Activated CD4-positive, alpha-beta T cell treated with anti-CD3 and anti-CD28 coated beads, Interleukin-2, amount 10 ng/mL, durations not matched to agents 24 days and 14 days (primary cell): ENCODE measurements at regions of chr7 and their contacts with region 1.

Region 1: DNA sequence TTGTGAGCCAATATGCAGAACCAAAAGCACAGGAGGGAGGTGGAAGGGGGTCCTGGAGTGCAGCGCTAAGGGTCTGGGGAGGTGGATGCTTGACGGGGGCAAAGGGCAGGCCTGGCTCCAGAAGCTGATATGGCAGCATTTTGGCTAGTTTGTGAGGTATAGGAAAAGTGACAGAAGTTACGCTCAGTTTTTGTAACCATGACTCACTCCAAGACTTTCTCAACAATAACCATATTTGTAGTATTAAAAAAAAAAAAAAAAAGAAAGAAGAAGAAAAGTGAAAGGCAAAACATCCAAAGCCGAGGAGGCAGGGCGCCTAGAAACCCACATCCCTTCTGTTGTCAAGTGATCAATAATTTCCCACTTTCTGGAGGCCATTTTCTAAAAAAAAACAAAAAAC is 92.3 kb downstream of the RNF216 start:
- DNase-seq: peak; percentile 86
- H3K4me3 Mint-ChIP-seq: peak overlapping the region; percentile 72
- H3K27ac Mint-ChIP-seq: peak overlapping the region; percentile 97
- H3K4me1 Mint-ChIP-seq: peaks cover 51% of the 10 kb centered on the region
- H3K27me3 Mint-ChIP-seq: no peaks in the 10 kb centered on the region

Region 2: GRCh38 chr7:5170251-5170650 is 518.9 kb before region 1 on chr7:
- intact Hi-C with region 1: no loop called
- DNase-seq: peak; percentile 68
- H3K4me3 Mint-ChIP-seq: peak overlapping the region; percentile 37
- H3K27ac Mint-ChIP-seq: no peak overlapping the region
- H3K4me1 Mint-ChIP-seq: peaks cover 15% of the 10 kb centered on the region
- H3K27me3 Mint-ChIP-seq: no peaks in the 10 kb centered on the region

Region 3: GRCh38 chr7:5636914-5637313 is 52.2 kb before region 1 on chr7:
- intact Hi-C with region 1: loop called (anchors 5 kb)
- DNase-seq: no peak
- H3K4me3 Mint-ChIP-seq: no peak overlapping the region
- H3K27ac Mint-ChIP-seq: no peak overlapping the region
- H3K4me1 Mint-ChIP-seq: peaks cover 10% of the 10 kb centered on the region
- H3K27me3 Mint-ChIP-seq: no peaks in the 10 kb centered on the region

Region 4: DNA sequence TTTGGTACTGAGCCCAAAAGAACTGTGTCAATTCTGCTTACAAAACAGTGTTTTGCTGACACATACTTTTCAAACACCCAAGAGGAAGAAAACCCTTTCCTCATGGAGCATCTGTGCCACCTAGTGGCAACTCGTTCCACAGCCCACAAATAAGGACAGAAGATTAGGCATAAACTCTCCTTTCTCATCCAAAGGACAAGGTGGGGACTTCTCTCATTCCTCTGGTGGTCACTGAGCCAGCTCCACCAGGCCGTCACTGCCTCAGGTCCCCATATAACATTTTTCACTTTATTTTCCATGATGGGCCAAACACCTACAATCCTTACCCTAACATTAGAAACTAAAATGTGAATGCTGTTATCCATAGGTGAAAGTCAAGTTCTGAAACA is 15.4 kb after region 1 on chr7:
- intact Hi-C with region 1: loop called (anchors 1 kb)
- DNase-seq: peak; percentile 93
- H3K4me3 Mint-ChIP-seq: no peak overlapping the region
- H3K27ac Mint-ChIP-seq: no peak overlapping the region
- H3K4me1 Mint-ChIP-seq: peaks cover 52% of the 10 kb centered on the region
- H3K27me3 Mint-ChIP-seq: no peaks in the 10 kb centered on the region

Region 5: GRCh38 chr7:6284461-6285360 is 595.6 kb after region 1 on chr7:
- intact Hi-C with region 1: no loop called
- DNase-seq: no peak
- H3K4me3 Mint-ChIP-seq: no peak overlapping the region
- H3K27ac Mint-ChIP-seq: no peak overlapping the region
- H3K4me1 Mint-ChIP-seq: no peaks in the 10 kb centered on the region
- H3K27me3 Mint-ChIP-seq: peaks cover 1% of the 10 kb centered on the region